ENCODE measurements at regions of chr16 and their contacts with region 1.

Region 1: GRCh38 chr16:53291757-53292392 is 142.4 kb upstream of the RBL2 start:
- DNase-seq: no peak
- ATAC-seq: no peak
- H3K4me3 ChIP-seq: no peak overlapping the region
- H3K27ac ChIP-seq: no peak overlapping the region
- H3K4me1 ChIP-seq: no peaks in the 10 kb centered on the region
- H3K27me3 ChIP-seq: no peaks in the 10 kb centered on the region

Region 2: GRCh38 chr16:53232826-53233529 is 58.9 kb before region 1 on chr16:
- intact Hi-C with region 1: no loop called
- DNase-seq: no peak
- ATAC-seq: no peak
- H3K4me3 ChIP-seq: no peak overlapping the region
- H3K27ac ChIP-seq: no peak overlapping the region
- H3K4me1 ChIP-seq: no peaks in the 10 kb centered on the region
- H3K27me3 ChIP-seq: no peaks in the 10 kb centered on the region

Region 3: GRCh38 chr16:53249331-53249730 is 42.5 kb before region 1 on chr16:
- intact Hi-C with region 1: loop called in 2 of 4 experiments (anchors 10 kb)
- DNase-seq: no peak
- ATAC-seq: no peak
- H3K4me3 ChIP-seq: no peak overlapping the region
- H3K27ac ChIP-seq: no peak overlapping the region
- H3K4me1 ChIP-seq: no peaks in the 10 kb centered on the region
- H3K27me3 ChIP-seq: no peaks in the 10 kb centered on the region

Region 4: GRCh38 chr16:53372992-53373871 is 81.4 kb after region 1 on chr16:
- intact Hi-C with region 1: no loop called
- DNase-seq: peak in 2 of 3 donors; percentile 58 to 62
- ATAC-seq: peak; percentile 32 to 33
- H3K4me3 ChIP-seq: peak overlapping the region; percentile 33
- H3K27ac ChIP-seq: no peak overlapping the region
- H3K4me1 ChIP-seq: peaks cover 3% of the 10 kb centered on the region
- H3K27me3 ChIP-seq: no peaks in the 10 kb centered on the region

Measured in right cardiac atrium (tissue), 5 donors.